ENCODE measurements at regions of chrX and their contacts with region 1.

Region 1: GRCh38 chrX:16852617-16853179 is 17.5 kb downstream of the RBBP7 start:
- DNase-seq: no peak
- ATAC-seq: no peak
- H3K4me3 ChIP-seq: no peak overlapping the region
- H3K27ac ChIP-seq: no peak overlapping the region
- H3K4me1 ChIP-seq: no peaks in the 10 kb centered on the region
- H3K27me3 ChIP-seq: no peaks in the 10 kb centered on the region
- CTCF ChIP-seq: no peak

Region 2: DNA sequence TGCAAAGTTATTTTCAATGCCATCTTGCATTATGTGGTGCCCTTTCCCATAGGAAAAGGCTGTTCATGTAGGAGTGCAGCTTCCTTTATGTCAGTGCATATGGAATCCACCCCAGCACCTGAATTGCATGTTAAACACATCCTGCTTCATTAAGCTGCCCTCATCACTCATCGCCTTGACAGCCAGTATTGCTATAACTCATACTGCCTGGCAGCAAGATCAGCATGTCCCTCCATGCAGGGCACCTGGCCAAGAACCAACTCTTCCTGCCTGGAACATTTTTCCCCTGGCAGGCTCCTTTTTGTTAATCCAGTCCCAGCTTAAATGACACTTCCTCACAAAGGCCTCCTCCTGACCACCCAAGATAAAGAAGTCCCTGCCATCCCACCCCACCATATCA is 1138.2 kb before region 1 on chrX:
- intact Hi-C with region 1: loop called in 1 of 2 experiments (anchors 5 kb)
- DNase-seq: peak in 1 of 2 donors; percentile 66
- ATAC-seq: peak in 3 of 4 donors; percentile 78 to 94 (median 91)
- H3K4me3 ChIP-seq: no peak overlapping the region
- H3K27ac ChIP-seq: no peak overlapping the region
- H3K4me1 ChIP-seq: no peaks in the 10 kb centered on the region
- H3K27me3 ChIP-seq: no peaks in the 10 kb centered on the region
- CTCF ChIP-seq: no peak

Measured in psoas muscle (tissue), 8 donors.